ENCODE measurements at regions of chr5 and their contacts with region 1.

Region 1: GRCh38 chr5:157603333-157604190 is 28.0 kb upstream of the ADAM19 start:
- DNase-seq: peak; percentile 99
- ATAC-seq: peak; percentile 68
- H3K4me3 ChIP-seq: peak overlapping the region; percentile 39
- H3K27ac ChIP-seq: peak overlapping the region; percentile 96
- H3K4me1 ChIP-seq: peaks cover 71% of the 10 kb centered on the region
- H3K27me3 ChIP-seq: no peaks in the 10 kb centered on the region
- CTCF ChIP-seq: no peak

Region 2: DNA sequence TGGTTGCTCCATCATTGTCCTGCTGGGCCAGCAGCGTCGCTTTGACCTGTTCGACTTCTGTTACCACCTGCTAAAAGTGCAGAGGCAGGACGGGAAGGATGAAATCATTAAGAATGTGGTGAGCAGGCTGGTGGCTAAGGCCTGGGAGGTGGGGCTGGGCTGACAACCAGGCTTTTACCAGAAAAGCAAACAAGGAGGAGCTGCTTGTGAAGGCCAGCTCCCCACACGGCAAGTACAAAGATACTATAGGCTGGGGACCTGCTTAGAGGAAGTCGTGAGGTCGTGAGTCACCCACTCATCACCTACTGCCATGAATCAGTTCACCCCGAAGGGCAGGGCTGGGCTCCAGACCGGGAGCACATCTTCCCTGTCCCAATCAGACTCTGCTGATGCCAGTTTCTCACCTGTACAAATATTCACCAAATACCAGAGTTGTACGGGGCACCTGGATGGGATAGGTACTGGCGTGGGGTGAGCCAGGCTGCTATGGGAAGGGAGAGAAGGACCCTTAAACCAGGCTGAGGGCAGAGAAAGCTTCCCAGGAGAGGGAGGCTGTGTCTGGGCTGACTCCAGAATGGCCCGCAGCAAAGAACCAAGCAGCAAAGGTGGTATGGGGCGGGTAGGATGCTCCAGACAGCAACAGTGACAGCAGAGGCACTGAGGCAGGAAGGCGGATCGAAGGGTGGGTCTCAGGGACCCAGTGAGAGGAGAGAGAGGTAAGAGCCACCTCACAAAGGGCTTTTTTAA is 212.8 kb before region 1 on chr5:
- CTCF ChIA-PET with region 1: no interaction called
- POLR2A ChIA-PET with region 1: no interaction called
- intact Hi-C with region 1: loop called (anchors 5 kb)
- DNase-seq: peak; percentile 100
- ATAC-seq: peak; percentile 93
- H3K4me3 ChIP-seq: peak overlapping the region; percentile 30
- H3K27ac ChIP-seq: peak overlapping the region; percentile 87
- H3K4me1 ChIP-seq: peaks cover 59% of the 10 kb centered on the region
- H3K27me3 ChIP-seq: no peaks in the 10 kb centered on the region
- CTCF ChIP-seq: no peak

Region 3: GRCh38 chr5:157575381-157576020 is 28.1 kb before region 1 on chr5 and contains the start of gene ADAM19:
- CTCF ChIA-PET with region 1: no interaction called
- POLR2A ChIA-PET with region 1: no interaction called
- intact Hi-C with region 1: loop called (anchors 1 kb)
- DNase-seq: peak; percentile 86
- ATAC-seq: peak; percentile 86
- H3K4me3 ChIP-seq: peak within 1 kb of the TSS; percentile 96
- H3K27ac ChIP-seq: peak within 1 kb of the TSS; percentile 76
- H3K4me1 ChIP-seq: peaks cover 34% of the 10 kb centered on the region
- H3K27me3 ChIP-seq: no peaks in the 10 kb centered on the region
- CTCF ChIP-seq: peak; percentile 22; the same call in 1 of the 2 replicates
- total RNA-seq, gene ADAM19: 115 and 130 TPM in 2 replicates

Region 4: DNA sequence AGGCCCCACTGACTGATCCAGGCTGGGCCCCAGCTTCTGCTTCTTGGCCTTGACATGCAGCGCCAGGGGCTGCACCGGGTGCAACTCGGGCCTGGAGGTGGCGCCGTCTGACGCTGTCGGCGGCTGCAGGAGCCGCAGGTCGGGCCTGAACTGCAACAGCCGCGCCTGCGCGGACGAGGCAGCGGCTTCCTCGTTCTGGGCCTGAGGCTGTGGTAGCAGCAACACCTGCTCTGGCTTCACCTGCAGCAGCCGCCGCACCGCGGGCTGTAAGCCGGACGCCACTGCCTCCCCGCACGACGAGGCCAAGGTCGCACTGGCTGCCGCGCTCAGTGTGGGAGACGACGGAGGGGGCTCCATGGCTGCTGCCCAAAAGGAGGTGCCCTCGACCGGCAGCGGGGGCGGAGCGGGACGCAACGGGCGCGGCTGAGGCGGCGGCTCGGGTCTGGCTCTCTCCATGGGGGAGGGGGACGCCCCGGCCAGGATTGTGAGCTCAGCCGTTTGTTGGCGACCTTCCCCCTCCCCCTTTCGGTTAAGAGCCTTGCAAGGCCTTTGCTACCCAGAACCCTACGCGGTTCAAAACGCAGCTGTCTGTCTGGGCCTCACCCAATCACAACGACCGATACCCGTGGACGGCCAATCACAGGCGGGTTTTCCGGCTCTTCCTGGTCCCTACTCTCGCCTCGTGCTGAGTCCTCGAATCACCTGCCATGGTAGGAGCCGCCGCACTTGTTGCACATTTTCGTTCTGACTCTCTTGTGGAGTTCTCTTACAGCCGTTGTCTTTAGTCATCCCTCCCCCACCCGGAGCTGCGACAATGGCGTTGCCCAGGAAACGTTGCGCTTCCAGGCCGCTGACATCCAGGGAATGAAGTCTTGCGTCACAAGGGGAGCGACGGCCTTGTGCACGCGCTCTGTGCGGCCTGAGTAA is 48.3 kb after region 1 on chr5 and contains the start of gene SOX30:
- CTCF ChIA-PET with region 1: no interaction called
- POLR2A ChIA-PET with region 1: no interaction called
- intact Hi-C with region 1: no loop called
- DNase-seq: no peak
- ATAC-seq: no peak
- H3K4me3 ChIP-seq: no peak within 1 kb of the TSS
- H3K27ac ChIP-seq: no peak within 1 kb of the TSS
- H3K4me1 ChIP-seq: peaks cover 10% of the 10 kb centered on the region
- H3K27me3 ChIP-seq: no peaks in the 10 kb centered on the region
- CTCF ChIP-seq: no peak
- total RNA-seq, gene SOX30: 0.51 TPM in 1 of 2 replicates, not detected in the other

Region 5: GRCh38 chr5:157670662-157671591 is 67.4 kb after region 1 on chr5 and contains the start of gene C5orf52:
- CTCF ChIA-PET with region 1: interaction called, 3 read pairs
- POLR2A ChIA-PET with region 1: no interaction called
- intact Hi-C with region 1: loop called (anchors 1 kb)
- DNase-seq: peak; percentile 96
- ATAC-seq: peak; percentile 58
- H3K4me3 ChIP-seq: peak within 1 kb of the TSS; percentile 64
- H3K27ac ChIP-seq: peak within 1 kb of the TSS; percentile 91
- H3K4me1 ChIP-seq: peaks cover 29% of the 10 kb centered on the region
- H3K27me3 ChIP-seq: no peaks in the 10 kb centered on the region
- CTCF ChIP-seq: no peak
- total RNA-seq, gene C5orf52: 0.84 TPM in 1 of 2 replicates, not detected in the other

Region 6: DNA sequence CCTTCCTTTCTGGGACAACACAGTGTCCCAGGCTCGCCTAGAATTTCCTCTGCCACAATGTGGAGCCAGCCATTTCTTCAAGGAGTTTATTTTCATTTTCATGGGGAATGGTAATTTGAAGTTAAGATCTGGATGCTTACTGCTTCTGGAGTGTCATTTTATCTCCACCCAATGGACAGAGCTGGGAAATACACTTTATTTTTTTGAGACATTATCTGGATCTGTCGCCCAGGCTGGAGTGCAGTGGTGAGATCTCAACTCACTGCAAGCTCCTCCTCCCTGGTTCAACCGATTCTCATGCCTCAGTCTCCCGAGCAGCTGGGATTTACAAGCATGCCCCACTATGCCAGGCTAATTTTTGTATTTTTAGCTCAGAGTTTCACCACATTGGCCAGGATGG is 115.0 kb after region 1 on chr5:
- CTCF ChIA-PET with region 1: no interaction called
- POLR2A ChIA-PET with region 1: no interaction called
- intact Hi-C with region 1: loop called (anchors 2 kb)
- DNase-seq: peak; percentile 92
- ATAC-seq: peak; percentile 97
- H3K4me3 ChIP-seq: no peak overlapping the region
- H3K27ac ChIP-seq: peak overlapping the region; percentile 58
- H3K4me1 ChIP-seq: peaks cover 20% of the 10 kb centered on the region
- H3K27me3 ChIP-seq: no peaks in the 10 kb centered on the region
- CTCF ChIP-seq: peak; percentile 90